Endothelial cell of umbilical vein (primary cell): ENCODE measurements at regions of chr6 and their contacts with region 1.

Region 1: DNA sequence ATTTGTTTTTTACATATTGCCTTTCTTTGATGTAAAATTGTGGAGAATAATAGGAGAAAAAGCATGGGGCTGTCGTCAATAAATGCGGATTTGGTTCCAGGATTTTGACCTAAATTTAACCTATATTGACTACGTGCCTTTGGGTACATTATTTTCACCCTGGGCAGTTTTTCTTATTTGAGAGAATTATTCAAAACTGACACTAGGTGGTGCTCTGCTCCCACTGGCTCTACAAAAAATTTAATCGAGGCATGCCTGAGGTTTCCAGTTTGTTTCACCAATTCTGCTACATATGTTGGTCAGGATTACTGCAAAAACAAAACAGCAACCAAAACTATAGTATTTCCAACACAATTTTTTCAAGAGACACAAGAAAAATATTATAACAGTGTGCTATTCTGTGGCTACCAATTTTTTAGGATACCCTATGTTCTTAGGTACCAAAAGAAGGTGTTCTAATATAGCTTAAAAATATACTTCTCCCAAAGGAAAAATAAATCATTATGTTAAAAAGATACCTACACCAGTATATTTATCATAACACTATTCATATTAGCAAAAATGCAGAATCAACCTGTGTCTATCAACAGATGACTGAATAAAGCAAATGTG is 48.6 kb upstream of the FABP7 start:
- DNase-seq: peak; percentile 28
- H3K4me3 ChIP-seq: no peak overlapping the region
- H3K27ac ChIP-seq: no peak overlapping the region
- H3K4me1 ChIP-seq: no peaks in the 10 kb centered on the region
- H3K27me3 ChIP-seq: peaks cover 5 to 12% of the 10 kb centered on the region in 2 experiments
- CTCF ChIP-seq: peak; percentile 52 to 54
- POLR2A ChIP-seq: no peak

Region 2: DNA sequence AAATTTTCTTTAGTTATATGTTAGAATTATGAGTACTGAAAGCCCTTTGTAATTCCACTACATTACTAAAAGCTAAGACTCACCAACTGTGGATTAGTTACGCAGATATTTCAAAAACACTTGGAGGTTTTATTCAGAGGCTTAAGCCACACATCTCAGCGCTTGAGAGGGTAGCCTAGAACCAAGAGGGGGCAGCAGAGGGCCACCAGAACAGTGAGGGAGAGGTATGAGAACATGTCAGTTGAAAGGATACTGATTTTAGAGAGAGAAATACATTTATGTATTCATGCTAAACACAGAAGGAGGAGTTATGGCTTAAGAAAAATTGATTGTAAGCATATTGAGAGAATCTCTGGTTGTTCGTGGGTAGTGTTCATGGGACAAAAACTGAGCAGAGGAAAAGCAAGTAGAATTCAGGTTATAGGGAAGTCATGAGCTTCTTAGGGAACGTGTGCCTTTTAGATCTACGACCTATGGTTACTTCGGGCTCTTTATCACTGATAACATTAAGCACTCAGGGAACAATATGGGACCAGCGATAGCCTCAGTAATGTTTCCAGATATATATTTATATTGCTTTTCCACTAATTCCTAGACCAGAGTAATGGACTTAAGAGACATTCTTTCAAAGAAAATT is 238.8 kb before region 1 on chr6:
- CTCF ChIA-PET with region 1: interaction called, 42 read pairs
- POLR2A ChIA-PET with region 1: no interaction called
- dilution Hi-C with region 1: no loop called
- intact Hi-C with region 1: loop called (anchors 1 kb)
- DNase-seq: peak; percentile 78
- H3K4me3 ChIP-seq: no peak overlapping the region
- H3K27ac ChIP-seq: no peak overlapping the region
- H3K4me1 ChIP-seq: no peaks in the 10 kb centered on the region
- H3K27me3 ChIP-seq: peaks cover 2 to 12% of the 10 kb centered on the region in 2 experiments
- CTCF ChIP-seq: peak; percentile 76 to 82
- POLR2A ChIP-seq: no peak

Region 3: GRCh38 chr6:122740936-122741335 is 10.1 kb after region 1 on chr6:
- CTCF ChIA-PET with region 1: interaction called, 12 read pairs
- POLR2A ChIA-PET with region 1: no interaction called
- dilution Hi-C with region 1: no loop called
- intact Hi-C with region 1: no loop called
- DNase-seq: no peak
- H3K4me3 ChIP-seq: no peak overlapping the region
- H3K27ac ChIP-seq: no peak overlapping the region
- H3K4me1 ChIP-seq: no peaks in the 10 kb centered on the region
- H3K27me3 ChIP-seq: peaks cover 0 to 1% of the 10 kb centered on the region in 2 experiments
- CTCF ChIP-seq: no peak
- POLR2A ChIP-seq: no peak

Region 4: DNA sequence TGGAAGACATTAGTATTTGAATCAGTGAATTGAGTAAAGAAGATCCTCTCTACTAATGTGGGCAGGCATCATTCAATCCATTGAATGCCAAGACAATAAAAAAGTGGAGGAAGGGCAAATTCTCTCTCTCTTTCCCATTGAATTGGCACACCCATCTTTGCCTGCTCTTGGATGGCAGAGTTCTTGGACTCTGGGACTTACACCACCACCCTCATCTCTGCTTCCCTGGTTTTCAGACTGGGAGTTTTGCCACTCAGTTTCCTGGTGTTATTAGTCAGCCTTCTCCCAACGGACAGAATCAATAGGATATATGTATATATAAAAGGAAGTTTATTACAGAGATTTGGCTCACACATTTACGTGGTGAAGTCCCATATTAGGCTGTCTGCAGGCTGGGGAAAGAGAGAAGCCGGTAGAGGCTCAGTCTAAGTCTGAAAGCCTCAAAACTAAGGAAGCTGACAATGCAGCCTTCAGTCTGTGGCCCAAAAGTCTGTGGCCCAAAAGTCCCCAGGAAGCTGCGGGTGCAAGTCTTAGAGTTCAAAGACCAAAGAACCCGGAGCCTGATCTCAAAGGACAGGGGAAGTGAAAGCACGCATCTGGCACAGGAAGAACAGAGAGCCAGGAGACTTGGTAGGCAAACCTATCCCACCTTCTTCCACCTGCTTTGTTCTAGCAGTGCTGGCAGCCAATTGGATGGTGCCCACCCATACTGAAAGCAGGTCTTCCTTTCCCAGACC is 122.5 kb after region 1 on chr6:
- CTCF ChIA-PET with region 1: no interaction called
- POLR2A ChIA-PET with region 1: no interaction called
- dilution Hi-C with region 1: no loop called
- intact Hi-C with region 1: no loop called
- DNase-seq: no peak
- H3K4me3 ChIP-seq: no peak overlapping the region
- H3K27ac ChIP-seq: no peak overlapping the region
- H3K4me1 ChIP-seq: no peaks in the 10 kb centered on the region
- H3K27me3 ChIP-seq: no peaks in the 10 kb centered on the region
- CTCF ChIP-seq: no peak
- POLR2A ChIP-seq: no peak

Region 5: DNA sequence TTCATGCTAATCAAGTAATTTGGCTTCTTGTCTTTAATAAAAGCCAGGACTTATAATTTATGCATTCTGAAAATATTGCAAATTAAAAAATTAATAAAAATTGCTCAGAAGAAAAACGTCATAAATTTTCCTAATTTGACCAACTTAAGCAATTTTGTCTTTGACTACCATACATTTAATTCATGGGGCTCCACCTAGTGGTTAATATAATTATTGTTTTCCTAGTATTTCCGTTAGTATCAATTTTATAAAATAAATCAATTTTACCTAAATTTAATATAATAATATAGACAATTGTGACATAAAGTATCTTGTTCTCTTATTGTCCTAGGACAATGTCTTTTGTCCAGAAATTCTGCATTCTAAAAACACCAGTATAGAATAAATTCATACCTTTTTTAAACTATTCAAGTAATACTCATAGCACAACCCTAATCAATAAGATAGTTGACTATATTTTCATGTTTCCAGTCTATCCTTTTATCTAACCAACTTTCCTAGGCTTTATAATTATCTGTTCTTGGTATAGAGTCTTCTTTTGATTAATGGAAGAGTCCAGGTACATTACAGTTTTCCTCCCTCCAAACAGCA is 585.9 kb after region 1 on chr6:
- CTCF ChIA-PET with region 1: interaction called, 5 read pairs
- POLR2A ChIA-PET with region 1: no interaction called
- dilution Hi-C with region 1: no loop called
- intact Hi-C with region 1: loop called (anchors 1 kb)
- DNase-seq: peak; percentile 14
- H3K4me3 ChIP-seq: no peak overlapping the region
- H3K27ac ChIP-seq: no peak overlapping the region
- H3K4me1 ChIP-seq: no peaks in the 10 kb centered on the region
- H3K27me3 ChIP-seq: peaks cover 0 to 3% of the 10 kb centered on the region in 2 experiments
- CTCF ChIP-seq: no peak
- POLR2A ChIP-seq: no peak